Mammary epithelial cell (primary cell): ENCODE measurements at regions of chr2 and their contacts with region 1.

Region 1: GRCh38 chr2:108922141-108922915 is 66.7 kb downstream of the EDAR start:
- DNase-seq: peak; percentile 91
- H3K4me3 ChIP-seq: no peak overlapping the region
- H3K27ac ChIP-seq: no peak overlapping the region
- H3K4me1 ChIP-seq: peaks cover 39% of the 10 kb centered on the region
- H3K27me3 ChIP-seq: peaks cover 14% of the 10 kb centered on the region
- CTCF ChIP-seq: no peak

Region 2: DNA sequence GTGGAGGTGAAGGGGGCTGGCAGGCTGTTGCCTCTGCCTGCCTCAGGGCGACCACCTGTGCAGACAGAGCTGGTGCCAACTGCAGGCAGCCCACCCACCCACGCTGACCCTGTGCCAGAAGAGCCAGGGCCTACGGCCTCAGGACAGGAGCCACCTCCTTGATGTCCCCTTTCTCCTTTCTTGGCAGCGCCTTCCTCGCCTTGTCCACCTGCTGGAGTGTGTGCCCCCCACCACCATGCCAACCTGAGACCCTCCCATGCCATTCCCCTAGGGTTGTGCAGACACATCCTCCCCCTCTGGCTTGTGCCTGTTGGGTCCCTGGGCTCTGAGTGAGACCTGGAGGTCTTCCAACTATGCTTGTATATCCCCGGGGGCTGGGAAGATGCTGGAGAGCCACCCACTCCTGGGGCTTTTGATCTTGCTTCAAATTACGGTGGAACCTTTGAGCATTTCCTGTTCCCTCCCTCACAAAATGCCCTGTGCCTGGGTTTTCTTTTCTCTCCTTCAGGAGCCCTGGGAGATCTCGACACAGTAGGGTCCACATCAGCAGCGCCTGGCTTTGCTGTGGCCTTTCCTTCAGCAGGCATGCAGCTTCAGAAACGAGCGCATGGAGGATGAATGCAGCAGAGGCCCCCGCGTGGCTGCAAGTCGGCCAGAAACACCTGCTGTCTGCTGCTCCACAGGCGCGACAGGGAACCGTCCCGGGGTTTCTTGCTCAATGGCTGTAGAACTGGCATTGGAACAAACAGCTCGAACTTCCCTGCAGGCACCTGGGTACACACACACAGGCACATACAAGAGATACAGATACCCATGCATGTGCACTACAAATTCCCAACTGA is 140.8 kb after region 1 on chr2:
- CTCF ChIA-PET with region 1: no interaction called
- dilution Hi-C with region 1: no loop called
- in situ Hi-C with region 1: no loop called
- intact Hi-C with region 1: loop called (anchors 2 kb)
- DNase-seq: no peak
- H3K4me3 ChIP-seq: no peak overlapping the region
- H3K27ac ChIP-seq: no peak overlapping the region
- H3K4me1 ChIP-seq: no peaks in the 10 kb centered on the region
- H3K27me3 ChIP-seq: peaks cover 6% of the 10 kb centered on the region
- CTCF ChIP-seq: no peak

Region 3: GRCh38 chr2:109209412-109209811 is 287.1 kb after region 1 on chr2:
- CTCF ChIA-PET with region 1: no interaction called
- dilution Hi-C with region 1: no loop called
- in situ Hi-C with region 1: no loop called
- intact Hi-C with region 1: loop called (anchors 5 kb)
- DNase-seq: peak; percentile 66
- H3K4me3 ChIP-seq: no peak overlapping the region
- H3K27ac ChIP-seq: no peak overlapping the region
- H3K4me1 ChIP-seq: peaks cover 36% of the 10 kb centered on the region
- H3K27me3 ChIP-seq: peaks cover 8% of the 10 kb centered on the region
- CTCF ChIP-seq: no peak